ENCODE measurements at regions of chr11 and their contacts with region 1.

Region 1: GRCh38 chr11:61967116-61967923 is at the start of gene FTH1:
- DNase-seq: peak; percentile 93
- ATAC-seq: peak; percentile 63
- H3K4me3 Mint-ChIP-seq: peak within 1 kb of the TSS; percentile 93
- H3K27ac Mint-ChIP-seq: peak within 1 kb of the TSS; percentile 97
- H3K4me1 Mint-ChIP-seq: peaks cover 72% of the 10 kb centered on the region
- H3K27me3 Mint-ChIP-seq: no peaks in the 10 kb centered on the region
- CTCF ChIP-seq: no peak
- total RNA-seq, gene FTH1: 865 and 906 TPM in 2 replicates

Region 2: DNA sequence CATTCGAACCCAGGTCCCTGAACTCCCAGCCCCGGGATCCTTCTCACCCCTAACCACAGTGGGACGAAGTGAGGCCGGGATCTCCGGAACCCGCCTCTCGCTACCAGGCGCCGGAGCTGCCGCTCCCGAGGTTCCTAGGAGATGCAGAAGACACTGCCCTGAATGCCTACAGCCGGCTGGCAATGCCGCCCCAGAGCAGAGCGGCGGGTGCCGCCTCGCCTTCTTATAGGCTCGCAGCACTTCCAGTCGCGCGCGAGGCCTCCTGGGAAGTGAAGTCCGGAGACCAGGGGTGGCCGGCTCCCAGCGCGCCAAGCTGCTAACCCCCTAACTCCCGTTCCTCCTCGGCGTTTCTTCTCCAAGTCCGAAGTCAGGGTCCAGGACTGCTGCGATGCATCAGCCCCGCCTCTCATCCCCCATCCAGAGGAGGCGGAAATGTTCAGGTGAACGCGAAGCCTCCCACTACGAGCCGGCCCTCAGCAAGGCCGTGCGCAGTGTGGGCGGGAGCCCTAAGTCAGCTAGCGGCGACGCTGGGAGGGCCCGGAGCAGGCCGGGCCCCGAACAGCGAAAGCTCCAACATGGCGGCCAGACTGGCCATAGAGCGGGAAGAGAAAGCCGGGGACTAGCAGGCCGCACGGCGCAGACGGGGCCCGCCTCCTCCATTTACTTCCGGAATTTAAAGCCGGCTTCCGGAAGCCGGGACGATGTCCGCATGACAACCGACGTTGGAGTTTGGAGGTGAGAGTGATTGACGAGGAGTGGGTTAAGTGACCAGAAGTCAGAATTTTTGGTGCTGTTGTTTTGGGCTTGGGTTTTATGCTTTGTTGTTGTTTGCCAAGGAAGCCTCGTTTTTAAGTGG is 605.4 kb before region 1 on chr11 and contains the starts of genes CYB561A3 and TMEM138:
- CTCF ChIA-PET with region 1: no interaction called
- POLR2A ChIA-PET with region 1: interaction called, 8 read pairs
- intact Hi-C with region 1: loop called (anchors 5 kb)
- DNase-seq: peak; percentile 84
- ATAC-seq: peak; percentile 76
- H3K4me3 Mint-ChIP-seq: peak within 1 kb of the TSS; percentile 100
- H3K27ac Mint-ChIP-seq: peak within 1 kb of the TSS; percentile 98
- H3K4me1 Mint-ChIP-seq: peaks cover 59% of the 10 kb centered on the region
- H3K27me3 Mint-ChIP-seq: no peaks in the 10 kb centered on the region
- CTCF ChIP-seq: no peak
- total RNA-seq, gene CYB561A3: 397 and 433 TPM in 2 replicates
- total RNA-seq, gene TMEM138: 69.7 and 81.2 TPM in 2 replicates

Region 3: GRCh38 chr11:61891331-61892084 is 75.8 kb before region 1 on chr11 and contains the start of gene FADS3:
- CTCF ChIA-PET with region 1: interaction called, 3 read pairs
- POLR2A ChIA-PET with region 1: interaction called, 45 read pairs
- intact Hi-C with region 1: loop called (anchors 1 kb)
- DNase-seq: peak; percentile 81
- ATAC-seq: peak; percentile 63
- H3K4me3 Mint-ChIP-seq: peak within 1 kb of the TSS; percentile 88
- H3K27ac Mint-ChIP-seq: peak within 1 kb of the TSS; percentile 87
- H3K4me1 Mint-ChIP-seq: peaks cover 41% of the 10 kb centered on the region
- H3K27me3 Mint-ChIP-seq: no peaks in the 10 kb centered on the region
- CTCF ChIP-seq: no peak
- total RNA-seq, gene FADS3: 121 and 135 TPM in 2 replicates

Region 4: DNA sequence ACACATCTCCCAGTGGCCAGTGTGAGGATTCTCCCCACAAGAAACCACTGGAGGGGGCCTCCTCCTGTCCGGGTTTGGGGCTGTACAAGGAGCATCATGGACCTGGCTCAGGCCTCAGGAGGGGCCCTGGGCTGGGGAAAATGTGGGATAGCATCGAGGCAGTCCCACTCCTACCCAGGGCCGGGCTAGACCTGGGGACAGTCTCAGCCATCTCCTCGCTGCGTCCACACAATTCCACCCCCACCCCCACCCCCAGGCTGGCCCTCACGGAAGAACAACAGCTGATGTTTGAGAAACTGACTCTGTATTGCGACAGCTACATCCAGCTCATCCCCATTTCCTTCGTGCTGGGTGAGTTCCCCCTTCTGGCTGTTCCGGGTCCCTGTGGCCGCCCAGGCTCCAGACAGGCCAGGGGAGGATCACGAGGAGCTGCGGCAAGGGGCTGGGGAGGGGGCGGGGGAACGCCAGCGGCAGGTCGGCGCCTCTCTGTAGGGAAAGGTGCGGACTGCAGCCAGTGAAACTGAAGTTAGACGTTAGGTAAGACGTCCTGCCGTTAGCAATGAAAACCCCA is 12.4 kb before region 1 on chr11:
- CTCF ChIA-PET with region 1: interaction called, 3 read pairs
- POLR2A ChIA-PET with region 1: interaction called, 16 read pairs
- intact Hi-C with region 1: loop called (anchors 1 kb)
- DNase-seq: no peak
- ATAC-seq: peak; percentile 40
- H3K4me3 Mint-ChIP-seq: peak overlapping the region; percentile 68
- H3K27ac Mint-ChIP-seq: no peak overlapping the region
- H3K4me1 Mint-ChIP-seq: peaks cover 25% of the 10 kb centered on the region
- H3K27me3 Mint-ChIP-seq: peaks cover 2% of the 10 kb centered on the region
- CTCF ChIP-seq: no peak

Region 5: GRCh38 chr11:62025487-62026105 is 58.3 kb after region 1 on chr11:
- CTCF ChIA-PET with region 1: interaction called, 6 read pairs
- POLR2A ChIA-PET with region 1: interaction called, 16 read pairs
- intact Hi-C with region 1: loop called (anchors 1 kb)
- DNase-seq: peak; percentile 34
- ATAC-seq: peak; percentile 79
- H3K4me3 Mint-ChIP-seq: peak overlapping the region; percentile 62
- H3K27ac Mint-ChIP-seq: peak overlapping the region; percentile 85
- H3K4me1 Mint-ChIP-seq: peaks cover 18% of the 10 kb centered on the region
- H3K27me3 Mint-ChIP-seq: peaks cover 5% of the 10 kb centered on the region
- CTCF ChIP-seq: no peak

Region 6: DNA sequence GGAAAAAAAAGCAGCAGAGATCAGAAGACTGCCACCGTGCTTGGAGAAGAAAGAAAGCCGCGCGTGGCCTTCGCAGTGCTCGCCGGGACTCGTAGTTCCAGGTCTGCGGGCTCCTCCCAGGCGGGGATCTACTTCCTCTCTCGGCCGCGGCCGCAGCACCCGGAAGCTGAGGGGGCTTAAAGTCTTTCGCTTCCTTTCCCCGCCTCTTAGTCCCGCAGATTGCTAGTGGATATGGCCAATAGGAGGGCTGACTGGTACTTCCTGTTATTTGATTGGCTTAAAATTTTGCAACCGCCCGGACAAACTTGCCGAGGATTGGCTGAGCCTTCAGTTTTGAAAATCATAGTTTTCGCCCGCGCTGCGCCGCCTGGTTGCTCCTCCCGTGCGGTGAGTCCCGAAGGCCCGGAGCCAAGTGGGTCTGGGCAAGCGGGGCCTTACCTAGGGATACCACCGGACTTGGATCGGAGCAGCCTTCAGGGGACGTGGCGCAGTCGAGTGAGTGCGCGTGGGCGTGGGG is 156.4 kb after region 1 on chr11 and contains the start of gene INCENP:
- CTCF ChIA-PET with region 1: no interaction called
- POLR2A ChIA-PET with region 1: interaction called, 4 read pairs
- intact Hi-C with region 1: loop called (anchors 2 kb)
- DNase-seq: peak; percentile 80
- ATAC-seq: peak; percentile 99
- H3K4me3 Mint-ChIP-seq: peak within 1 kb of the TSS; percentile 93
- H3K27ac Mint-ChIP-seq: peak within 1 kb of the TSS; percentile 84
- H3K4me1 Mint-ChIP-seq: peaks cover 23% of the 10 kb centered on the region
- H3K27me3 Mint-ChIP-seq: no peaks in the 10 kb centered on the region
- CTCF ChIP-seq: no peak
- total RNA-seq, gene INCENP: 29.0 and 34.8 TPM in 2 replicates